Activated naive CD4-positive, alpha-beta T cell treated with anti-CD3 and anti-CD28 coated beads for 36 hours (primary cell): ENCODE measurements at regions of chr19 and their contacts with region 1.

Region 1: GRCh38 chr19:45187421-45188100 is 9.0 kb downstream of the BLOC1S3 start:
- DNase-seq: peak; percentile 32
- H3K4me3 Mint-ChIP-seq: no peak overlapping the region
- H3K27ac Mint-ChIP-seq: no peak overlapping the region
- H3K4me1 Mint-ChIP-seq: peaks cover 13% of the 10 kb centered on the region
- H3K27me3 Mint-ChIP-seq: no peaks in the 10 kb centered on the region

Region 2: GRCh38 chr19:44869733-44870470 is 317.7 kb before region 1 on chr19:
- CTCF ChIA-PET with region 1: no interaction called
- intact Hi-C with region 1: no loop called
- DNase-seq: no peak
- H3K4me3 Mint-ChIP-seq: no peak overlapping the region
- H3K27ac Mint-ChIP-seq: no peak overlapping the region
- H3K4me1 Mint-ChIP-seq: no peaks in the 10 kb centered on the region
- H3K27me3 Mint-ChIP-seq: no peaks in the 10 kb centered on the region

Region 3: DNA sequence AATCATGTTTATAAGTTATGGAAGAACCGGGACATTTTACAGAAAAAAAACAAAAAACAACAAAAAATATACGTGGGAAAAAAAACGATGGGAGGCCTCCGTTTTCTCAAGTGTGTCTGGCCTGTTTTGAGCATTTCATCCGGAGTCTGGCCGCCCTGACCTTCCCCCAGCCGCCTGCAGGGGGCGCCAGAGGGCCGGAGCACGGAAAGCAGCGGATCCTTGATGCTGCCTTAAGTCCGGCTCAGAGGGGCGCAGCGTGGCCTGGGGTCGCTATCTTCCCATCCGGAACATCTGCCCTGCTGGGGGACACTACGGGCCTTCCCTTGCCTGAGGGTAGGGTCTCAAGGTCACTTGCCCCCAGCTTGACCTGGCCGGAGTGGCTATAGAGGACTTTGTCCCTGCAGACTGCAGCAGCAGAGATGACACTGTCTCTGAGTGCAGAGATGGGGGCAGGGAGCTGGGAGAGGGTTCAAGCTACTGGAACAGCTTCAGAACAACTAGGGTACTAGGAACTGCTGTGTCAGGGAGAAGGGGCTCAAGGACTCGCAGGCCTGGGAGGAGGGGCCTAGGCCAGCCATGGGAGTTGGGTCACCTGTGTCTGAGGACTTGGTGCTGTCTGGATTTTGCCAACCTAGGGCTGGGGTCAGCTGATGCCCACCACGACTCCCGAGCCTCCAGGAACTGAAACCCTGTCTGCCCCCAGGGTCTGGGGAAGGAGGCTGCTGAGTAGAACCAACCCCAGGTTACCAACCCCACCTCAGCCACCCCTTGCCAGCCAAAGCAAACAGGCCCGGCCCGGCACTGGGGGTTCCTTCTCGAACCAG is 283.7 kb before region 1 on chr19:
- CTCF ChIA-PET with region 1: no interaction called
- intact Hi-C with region 1: loop called (anchors 5 kb)
- DNase-seq: peak; percentile 80
- H3K4me3 Mint-ChIP-seq: no peak overlapping the region
- H3K27ac Mint-ChIP-seq: no peak overlapping the region
- H3K4me1 Mint-ChIP-seq: peaks cover 15% of the 10 kb centered on the region
- H3K27me3 Mint-ChIP-seq: peaks cover 22% of the 10 kb centered on the region

Region 4: GRCh38 chr19:44988896-44989556 is 198.5 kb before region 1 on chr19:
- CTCF ChIA-PET with region 1: no interaction called
- intact Hi-C with region 1: loop called (anchors 1 kb)
- DNase-seq: peak; percentile 77
- H3K4me3 Mint-ChIP-seq: no peak overlapping the region
- H3K27ac Mint-ChIP-seq: no peak overlapping the region
- H3K4me1 Mint-ChIP-seq: no peaks in the 10 kb centered on the region
- H3K27me3 Mint-ChIP-seq: no peaks in the 10 kb centered on the region

Region 5: DNA sequence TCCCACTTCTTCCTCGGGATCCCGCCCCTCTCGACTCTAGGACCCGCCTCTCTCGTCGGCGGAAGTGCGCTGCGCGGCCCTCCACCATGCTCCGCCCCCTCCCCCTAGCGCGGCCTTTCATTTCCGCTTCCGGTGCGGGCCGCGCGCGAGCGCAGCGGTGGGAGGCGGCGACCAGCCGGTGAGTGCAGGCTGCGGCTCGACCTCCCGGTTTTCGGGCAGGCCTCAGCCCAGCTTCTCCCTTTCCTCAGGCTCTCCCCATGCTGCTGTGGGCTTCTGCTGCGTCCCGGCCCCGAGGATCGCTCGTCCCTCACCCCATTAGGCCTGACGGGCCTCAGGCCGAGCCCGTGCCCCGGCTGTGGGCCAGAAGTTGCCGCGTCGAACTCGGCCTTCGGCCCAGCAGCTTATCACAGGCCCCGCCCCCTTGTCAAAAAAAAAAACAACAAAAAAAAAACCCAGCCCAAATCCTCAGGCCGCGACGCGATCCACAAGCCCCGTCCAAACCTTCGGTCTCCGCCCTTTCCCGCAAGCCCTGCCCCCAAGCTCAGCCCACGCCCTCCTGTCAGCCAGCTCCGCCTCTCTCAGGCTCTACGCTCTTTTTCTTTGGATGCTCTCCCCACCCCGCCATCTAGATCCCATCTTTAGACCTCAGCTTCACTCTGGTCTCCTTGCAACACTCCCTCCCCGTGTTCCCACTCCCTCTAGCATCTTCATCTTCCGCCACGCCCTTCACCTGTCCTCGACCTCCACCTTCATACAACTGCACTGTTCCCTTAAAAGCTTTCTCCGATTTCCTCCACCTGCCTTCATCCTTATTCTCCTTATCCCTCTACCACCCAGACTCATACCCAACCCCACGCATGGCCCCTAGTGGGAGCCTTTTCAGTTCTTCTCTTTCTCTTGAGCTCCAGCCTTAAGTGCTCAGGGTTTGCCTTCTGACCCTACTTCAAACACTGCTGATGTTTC is 148.3 kb before region 1 on chr19 and contains the start of gene CLASRP:
- CTCF ChIA-PET with region 1: no interaction called
- intact Hi-C with region 1: no loop called
- DNase-seq: peak; percentile 91
- H3K4me3 Mint-ChIP-seq: peak within 1 kb of the TSS; percentile 91
- H3K27ac Mint-ChIP-seq: peak within 1 kb of the TSS; percentile 90
- H3K4me1 Mint-ChIP-seq: peaks cover 33% of the 10 kb centered on the region
- H3K27me3 Mint-ChIP-seq: no peaks in the 10 kb centered on the region
- total RNA-seq, gene CLASRP: 106 to 113 TPM

Region 6: GRCh38 chr19:45103156-45103507 is 84.4 kb before region 1 on chr19:
- CTCF ChIA-PET with region 1: no interaction called
- intact Hi-C with region 1: loop called (anchors 1 kb)
- DNase-seq: peak; percentile 63
- H3K4me3 Mint-ChIP-seq: peak overlapping the region; percentile 14
- H3K27ac Mint-ChIP-seq: no peak overlapping the region
- H3K4me1 Mint-ChIP-seq: peaks cover 49% of the 10 kb centered on the region
- H3K27me3 Mint-ChIP-seq: no peaks in the 10 kb centered on the region

Region 7: DNA sequence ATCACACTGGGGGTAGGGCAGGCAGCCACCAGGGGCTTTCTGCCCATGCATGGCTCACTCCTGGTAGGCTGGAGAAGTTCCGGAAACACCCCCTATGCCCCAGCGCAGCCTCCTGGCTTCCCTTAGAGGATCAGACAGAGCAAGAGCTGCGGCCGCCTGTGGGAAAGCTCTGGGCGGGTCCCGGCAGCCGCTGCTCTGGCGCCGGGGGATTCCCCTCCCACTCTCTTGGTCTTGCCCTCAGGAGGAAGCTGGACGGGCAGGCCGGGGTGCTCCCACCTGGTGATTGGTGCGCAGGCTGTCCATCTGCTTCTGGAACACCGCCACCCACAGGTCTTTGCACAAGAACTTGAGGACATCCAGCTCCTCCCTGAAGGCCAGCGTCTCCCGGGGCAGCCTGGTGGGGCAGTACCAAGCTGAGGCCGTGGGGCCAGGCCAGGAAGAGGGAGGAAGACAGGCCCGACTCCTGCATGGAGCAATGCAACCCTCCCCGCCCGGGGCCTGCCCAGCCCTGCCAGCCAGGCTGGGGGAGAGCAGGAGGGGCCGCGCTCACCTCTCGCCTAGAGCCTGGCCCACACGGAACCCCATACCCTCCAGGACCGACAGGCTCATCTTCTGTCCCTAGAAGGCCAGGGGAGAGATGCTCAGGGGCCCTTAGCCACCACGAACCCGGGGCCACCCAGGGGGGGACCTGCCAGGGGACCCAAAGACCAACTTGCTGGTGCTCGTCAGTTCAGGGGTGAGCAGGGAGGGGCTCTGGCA is 22.8 kb before region 1 on chr19:
- CTCF ChIA-PET with region 1: interaction called, 3 read pairs
- intact Hi-C with region 1: loop called (anchors 2 kb)
- DNase-seq: peak; percentile 92
- H3K4me3 Mint-ChIP-seq: no peak overlapping the region
- H3K27ac Mint-ChIP-seq: no peak overlapping the region
- H3K4me1 Mint-ChIP-seq: peaks cover 16% of the 10 kb centered on the region
- H3K27me3 Mint-ChIP-seq: no peaks in the 10 kb centered on the region

Region 8: DNA sequence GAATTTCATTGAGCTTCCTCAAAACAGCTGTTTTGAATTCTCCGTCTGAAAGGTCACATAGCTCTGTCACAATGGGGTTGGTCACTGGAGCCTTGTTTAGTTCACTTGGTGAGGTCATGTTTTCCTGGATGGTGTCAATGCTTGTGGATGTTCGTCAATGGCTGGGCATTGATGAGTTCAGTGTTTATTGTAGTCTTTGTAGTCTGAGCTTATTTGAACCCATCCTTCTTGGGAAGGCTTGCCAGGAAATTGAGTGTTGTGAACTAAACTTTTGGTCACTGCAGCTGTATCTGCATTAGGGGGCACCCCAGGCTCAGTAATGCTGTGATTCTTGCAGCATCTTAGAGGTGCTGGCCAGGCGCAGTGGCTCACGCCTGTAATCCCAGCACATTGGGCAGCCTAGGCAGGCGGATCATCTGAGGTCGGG is 13.0 kb after region 1 on chr19:
- CTCF ChIA-PET with region 1: no interaction called
- intact Hi-C with region 1: no loop called
- DNase-seq: peak; percentile 19
- H3K4me3 Mint-ChIP-seq: no peak overlapping the region
- H3K27ac Mint-ChIP-seq: no peak overlapping the region
- H3K4me1 Mint-ChIP-seq: no peaks in the 10 kb centered on the region
- H3K27me3 Mint-ChIP-seq: no peaks in the 10 kb centered on the region

Region 9: GRCh38 chr19:45264781-45265317 is 77.3 kb after region 1 on chr19:
- CTCF ChIA-PET with region 1: no interaction called
- intact Hi-C with region 1: no loop called
- DNase-seq: no peak
- H3K4me3 Mint-ChIP-seq: no peak overlapping the region
- H3K27ac Mint-ChIP-seq: no peak overlapping the region
- H3K4me1 Mint-ChIP-seq: no peaks in the 10 kb centered on the region
- H3K27me3 Mint-ChIP-seq: no peaks in the 10 kb centered on the region